CD4-positive, alpha-beta T cell (primary cell): ENCODE measurements at regions of chr20 and their contacts with region 1.

Region 1: DNA sequence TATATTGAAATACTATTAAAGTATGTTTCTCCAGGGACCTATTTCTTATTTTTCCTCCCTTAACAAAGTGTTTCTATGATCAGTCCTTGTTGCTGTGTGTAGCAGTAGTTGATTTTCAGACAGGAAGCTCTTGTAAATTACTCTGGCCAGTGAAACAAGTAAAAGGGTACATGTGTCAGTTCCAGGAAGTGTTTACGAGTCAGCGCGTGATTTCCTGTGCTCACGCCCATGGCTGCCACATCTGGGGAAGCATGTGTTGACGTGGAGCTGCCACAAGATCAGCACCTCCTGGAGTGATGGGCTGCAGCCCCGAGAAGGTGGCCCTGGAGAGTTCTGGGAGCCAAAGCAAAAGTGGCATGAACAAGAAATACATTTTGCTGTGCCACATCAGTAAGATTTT is 38.6 kb upstream of the GGTLC1 start:
- DNase-seq: peak; percentile 56 to 93 (median 78)
- ATAC-seq: peak; percentile 98
- H3K4me3 ChIP-seq: peak overlapping the region; percentile 15
- H3K4me3 Mint-ChIP-seq: peak overlapping the region; percentile 73
- H3K27ac ChIP-seq: peak overlapping the region; percentile 68 to 92
- H3K27ac Mint-ChIP-seq: peak overlapping the region; percentile 97
- H3K4me1 ChIP-seq: peaks cover 24% of the 10 kb centered on the region
- H3K4me1 Mint-ChIP-seq: peaks cover 50% of the 10 kb centered on the region
- H3K27me3 ChIP-seq: no peaks in the 10 kb centered on the region
- H3K27me3 Mint-ChIP-seq: no peaks in the 10 kb centered on the region
- CTCF ChIP-seq: no peak

Region 2: DNA sequence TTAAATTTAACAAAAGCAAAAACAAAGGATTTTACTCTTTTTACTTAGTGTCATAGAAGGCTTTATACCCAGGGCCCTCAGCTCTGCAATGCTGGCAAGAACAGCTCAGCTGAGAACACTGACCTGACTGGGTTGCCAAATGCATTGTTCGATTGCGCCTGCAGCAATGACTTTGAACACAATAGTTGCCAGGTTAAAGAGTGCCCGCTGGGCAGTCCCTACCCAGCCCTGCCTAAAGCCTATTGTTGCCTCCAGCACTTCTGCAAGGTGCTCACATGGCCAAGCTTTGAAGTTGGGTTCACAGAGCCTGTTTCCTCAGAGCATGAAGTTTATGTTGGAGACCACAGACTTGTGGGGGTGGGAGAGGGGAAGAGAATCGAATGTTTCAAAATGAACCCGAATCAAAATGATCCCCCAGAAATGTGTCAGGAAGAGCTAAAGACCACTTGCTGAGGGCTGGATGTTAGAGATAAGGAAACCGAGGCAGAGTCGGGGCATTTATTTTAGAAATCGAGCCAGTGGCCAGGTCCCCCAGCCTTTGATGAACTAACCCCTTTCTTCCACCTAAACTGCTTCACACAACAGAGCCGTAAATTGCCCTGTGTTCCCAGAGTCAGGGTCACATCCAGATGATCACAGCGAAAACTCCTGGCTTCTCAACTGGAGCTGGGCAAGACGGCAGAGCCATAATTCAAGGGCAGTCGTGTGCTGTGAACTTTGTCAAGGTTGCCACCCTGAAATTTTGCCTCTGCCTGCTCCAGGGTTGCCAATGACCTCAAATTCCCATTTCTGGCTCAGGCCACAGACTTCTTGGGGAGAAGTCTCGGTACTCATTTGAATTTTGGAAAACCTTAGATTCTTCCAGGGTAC is 1497.8 kb before region 1 on chr20:
- CTCF ChIA-PET with region 1: no interaction called
- POLR2A ChIA-PET with region 1: no interaction called
- intact Hi-C with region 1: no loop called
- DNase-seq: no peak
- ATAC-seq: no peak
- H3K4me3 ChIP-seq: no peak overlapping the region
- H3K4me3 Mint-ChIP-seq: no peak overlapping the region
- H3K27ac ChIP-seq: no peak overlapping the region
- H3K27ac Mint-ChIP-seq: no peak overlapping the region
- H3K4me1 ChIP-seq: no peaks in the 10 kb centered on the region
- H3K4me1 Mint-ChIP-seq: no peaks in the 10 kb centered on the region
- H3K27me3 ChIP-seq: no peaks in the 10 kb centered on the region
- H3K27me3 Mint-ChIP-seq: peaks cover 5% of the 10 kb centered on the region
- CTCF ChIP-seq: no peak

Region 3: GRCh38 chr20:23331450-23332350 is 695.5 kb before region 1 on chr20:
- CTCF ChIA-PET with region 1: no interaction called
- POLR2A ChIA-PET with region 1: no interaction called
- intact Hi-C with region 1: no loop called
- DNase-seq: no peak
- ATAC-seq: no peak
- H3K4me3 ChIP-seq: no peak overlapping the region
- H3K4me3 Mint-ChIP-seq: no peak overlapping the region
- H3K27ac ChIP-seq: no peak overlapping the region
- H3K27ac Mint-ChIP-seq: no peak overlapping the region
- H3K4me1 ChIP-seq: peaks cover 3% of the 10 kb centered on the region
- H3K4me1 Mint-ChIP-seq: no peaks in the 10 kb centered on the region
- H3K27me3 ChIP-seq: no peaks in the 10 kb centered on the region
- H3K27me3 Mint-ChIP-seq: no peaks in the 10 kb centered on the region
- CTCF ChIP-seq: no peak

Region 4: DNA sequence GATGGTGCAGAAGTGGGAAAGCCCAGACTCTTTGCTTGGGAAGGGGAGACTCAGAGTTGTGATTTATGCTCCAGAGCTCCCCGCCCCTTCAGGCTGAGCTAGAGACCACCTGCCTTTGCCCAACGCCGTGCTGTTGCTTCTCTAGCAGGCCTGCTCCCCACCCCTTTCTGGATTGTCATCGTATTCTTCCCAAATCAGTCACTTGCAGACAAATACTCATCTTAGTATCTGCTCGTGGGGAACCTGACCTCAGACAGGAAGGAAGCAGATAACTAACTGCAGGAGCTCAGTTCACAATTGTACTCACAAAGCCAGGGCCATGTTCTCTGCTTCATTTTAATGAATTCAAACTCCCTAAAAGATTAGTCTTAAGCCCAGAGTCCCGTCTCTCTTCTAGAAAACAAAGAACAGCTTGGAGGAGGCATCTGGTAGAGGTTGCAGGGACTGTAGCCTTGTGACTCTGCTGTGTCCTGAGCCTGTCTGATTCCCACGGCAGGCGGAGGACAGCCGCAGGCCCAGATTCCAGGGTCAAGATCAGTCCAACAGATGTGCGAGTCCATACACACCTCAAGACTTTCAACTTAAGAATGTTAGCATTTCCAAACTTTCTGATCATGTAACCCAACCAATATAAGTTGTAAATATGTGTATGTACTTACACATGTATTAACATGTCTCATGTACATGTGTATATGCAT is 18.5 kb after region 1 on chr20:
- CTCF ChIA-PET with region 1: interaction called, 3 read pairs
- POLR2A ChIA-PET with region 1: interaction called, 29 read pairs
- intact Hi-C with region 1: loop called in 1 of 2 experiments (anchors 2 kb)
- DNase-seq: peak in 4 of 14 experiments; percentile 29 to 45 (median 37)
- ATAC-seq: peak; percentile 88
- H3K4me3 ChIP-seq: no peak overlapping the region
- H3K4me3 Mint-ChIP-seq: peak overlapping the region; percentile 31
- H3K27ac ChIP-seq: peak overlapping the region in 1 of 2 donors; percentile 43
- H3K27ac Mint-ChIP-seq: peak overlapping the region; percentile 90
- H3K4me1 ChIP-seq: peaks cover 36% of the 10 kb centered on the region
- H3K4me1 Mint-ChIP-seq: peaks cover 61% of the 10 kb centered on the region
- H3K27me3 ChIP-seq: no peaks in the 10 kb centered on the region
- H3K27me3 Mint-ChIP-seq: no peaks in the 10 kb centered on the region
- CTCF ChIP-seq: no peak

Region 5: DNA sequence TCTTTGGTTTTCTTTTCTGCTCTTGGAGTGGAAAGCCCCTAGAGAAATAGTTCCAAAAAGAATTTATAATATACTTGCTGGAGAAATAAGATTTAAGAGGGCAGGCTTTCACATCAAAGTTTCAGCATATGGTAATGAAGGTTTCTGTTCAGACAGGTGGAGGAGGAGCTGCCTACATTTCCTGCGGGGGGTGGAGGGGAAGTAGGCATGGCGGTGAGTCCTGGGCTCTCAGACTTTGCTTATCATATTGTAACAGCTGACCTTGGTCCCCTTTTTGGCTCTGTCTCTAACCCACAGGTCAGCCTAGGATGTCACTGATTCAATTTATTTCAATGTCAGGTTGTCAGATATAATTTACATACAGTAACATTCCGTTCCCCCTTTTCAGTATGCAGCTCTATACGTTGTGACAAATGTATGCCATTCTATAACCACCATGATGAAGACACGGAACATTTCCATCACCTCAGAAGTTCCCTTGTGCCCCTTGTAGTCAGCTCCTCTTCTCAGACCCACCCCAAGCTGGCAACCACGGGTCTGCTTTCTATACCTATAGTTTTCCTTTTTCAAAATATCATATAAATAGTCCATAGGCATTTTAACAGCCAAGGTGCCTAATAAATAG is 39.0 kb after region 1 on chr20:
- CTCF ChIA-PET with region 1: no interaction called
- POLR2A ChIA-PET with region 1: interaction called, 20 read pairs
- intact Hi-C with region 1: loop called in 1 of 2 experiments (anchors 2 kb)
- DNase-seq: peak in 11 of 14 experiments; percentile 17 to 58 (median 38)
- ATAC-seq: peak; percentile 94
- H3K4me3 ChIP-seq: peak overlapping the region; percentile 13
- H3K4me3 Mint-ChIP-seq: peak overlapping the region; percentile 88
- H3K27ac ChIP-seq: peak overlapping the region in 1 of 2 donors; percentile 2
- H3K27ac Mint-ChIP-seq: peak overlapping the region; percentile 85
- H3K4me1 ChIP-seq: peaks cover 12% of the 10 kb centered on the region
- H3K4me1 Mint-ChIP-seq: peaks cover 21% of the 10 kb centered on the region
- H3K27me3 ChIP-seq: no peaks in the 10 kb centered on the region
- H3K27me3 Mint-ChIP-seq: no peaks in the 10 kb centered on the region
- CTCF ChIP-seq: no peak

Region 6: GRCh38 chr20:24100385-24101011 is 73.3 kb after region 1 on chr20:
- CTCF ChIA-PET with region 1: no interaction called
- POLR2A ChIA-PET with region 1: no interaction called
- intact Hi-C with region 1: loop called in 1 of 2 experiments (anchors 2 kb)
- DNase-seq: peak; percentile 17 to 79 (median 54)
- ATAC-seq: peak; percentile 96
- H3K4me3 ChIP-seq: no peak overlapping the region
- H3K4me3 Mint-ChIP-seq: no peak overlapping the region
- H3K27ac ChIP-seq: no peak overlapping the region
- H3K27ac Mint-ChIP-seq: no peak overlapping the region
- H3K4me1 ChIP-seq: peaks cover 5% of the 10 kb centered on the region
- H3K4me1 Mint-ChIP-seq: no peaks in the 10 kb centered on the region
- H3K27me3 ChIP-seq: no peaks in the 10 kb centered on the region
- H3K27me3 Mint-ChIP-seq: peaks cover 5% of the 10 kb centered on the region
- CTCF ChIP-seq: peak; percentile 80

Region 7: GRCh38 chr20:24245093-24245492 is 217.9 kb after region 1 on chr20:
- CTCF ChIA-PET with region 1: no interaction called
- POLR2A ChIA-PET with region 1: no interaction called
- intact Hi-C with region 1: no loop called
- DNase-seq: no peak
- ATAC-seq: no peak
- H3K4me3 ChIP-seq: no peak overlapping the region
- H3K4me3 Mint-ChIP-seq: no peak overlapping the region
- H3K27ac ChIP-seq: no peak overlapping the region
- H3K27ac Mint-ChIP-seq: no peak overlapping the region
- H3K4me1 ChIP-seq: no peaks in the 10 kb centered on the region
- H3K4me1 Mint-ChIP-seq: no peaks in the 10 kb centered on the region
- H3K27me3 ChIP-seq: peaks cover 0 to 5% of the 10 kb centered on the region in 2 experiments
- H3K27me3 Mint-ChIP-seq: peaks cover 18% of the 10 kb centered on the region
- CTCF ChIP-seq: no peak

Region 8: GRCh38 chr20:24309596-24309995 is 282.4 kb after region 1 on chr20:
- CTCF ChIA-PET with region 1: no interaction called
- POLR2A ChIA-PET with region 1: no interaction called
- intact Hi-C with region 1: no loop called
- DNase-seq: no peak
- ATAC-seq: no peak
- H3K4me3 ChIP-seq: no peak overlapping the region
- H3K4me3 Mint-ChIP-seq: no peak overlapping the region
- H3K27ac ChIP-seq: no peak overlapping the region
- H3K27ac Mint-ChIP-seq: no peak overlapping the region
- H3K4me1 ChIP-seq: no peaks in the 10 kb centered on the region
- H3K4me1 Mint-ChIP-seq: no peaks in the 10 kb centered on the region
- H3K27me3 ChIP-seq: peaks cover 0 to 2% of the 10 kb centered on the region in 2 experiments
- H3K27me3 Mint-ChIP-seq: no peaks in the 10 kb centered on the region
- CTCF ChIP-seq: no peak